HepG2 (cell line): ENCODE measurements at regions of chr14 and their contacts with region 1.

Region 1: GRCh38 chr14:70972107-70972976 is 65.1 kb downstream of the PCNX1 start:
- DNase-seq: peak; percentile 67
- ATAC-seq: peak; percentile 80
- H3K4me3 ChIP-seq: no peak overlapping the region
- H3K27ac ChIP-seq: no peak overlapping the region
- H3K4me1 ChIP-seq: no peaks in the 10 kb centered on the region
- H3K27me3 ChIP-seq: no peaks in the 10 kb centered on the region
- CTCF ChIP-seq: peak; percentile 86
- EP300 ChIP-seq: no peak
- POLR2A ChIP-seq: no peak
- RAD21 ChIP-seq: peak; percentile 60; the same call in 1 of the 2 replicates

Region 2: GRCh38 chr14:70600382-70601157 is 371.8 kb before region 1 on chr14 and contains the start of gene MED6:
- CTCF ChIA-PET with region 1: no interaction called
- POLR2A ChIA-PET with region 1: no interaction called
- in situ Hi-C with region 1: loop called (anchors 25 kb)
- intact Hi-C with region 1: no loop called
- DNase-seq: peak; percentile 89
- ATAC-seq: peak; percentile 99
- H3K4me3 ChIP-seq: peak within 1 kb of the TSS; percentile 90 to 99 (median 98)
- H3K27ac ChIP-seq: peak within 1 kb of the TSS; percentile 86
- H3K4me1 ChIP-seq: peaks cover 23% of the 10 kb centered on the region
- H3K27me3 ChIP-seq: peaks cover 0 to 7% of the 10 kb centered on the region in 2 experiments; a peak in 1 of 5 replicates
- CTCF ChIP-seq: no peak
- EP300 ChIP-seq: 0 out of 4 replicates have a peak, but pooled peaks of 1 of the 2 experiments have one; percentile 36
- POLR2A ChIP-seq: peak; percentile 43 to 85; a peak in 2 of 4 replicates
- RAD21 ChIP-seq: no peak
- total RNA-seq, gene MED6: 47.8 and 64.0 TPM in 2 replicates

Region 3: DNA sequence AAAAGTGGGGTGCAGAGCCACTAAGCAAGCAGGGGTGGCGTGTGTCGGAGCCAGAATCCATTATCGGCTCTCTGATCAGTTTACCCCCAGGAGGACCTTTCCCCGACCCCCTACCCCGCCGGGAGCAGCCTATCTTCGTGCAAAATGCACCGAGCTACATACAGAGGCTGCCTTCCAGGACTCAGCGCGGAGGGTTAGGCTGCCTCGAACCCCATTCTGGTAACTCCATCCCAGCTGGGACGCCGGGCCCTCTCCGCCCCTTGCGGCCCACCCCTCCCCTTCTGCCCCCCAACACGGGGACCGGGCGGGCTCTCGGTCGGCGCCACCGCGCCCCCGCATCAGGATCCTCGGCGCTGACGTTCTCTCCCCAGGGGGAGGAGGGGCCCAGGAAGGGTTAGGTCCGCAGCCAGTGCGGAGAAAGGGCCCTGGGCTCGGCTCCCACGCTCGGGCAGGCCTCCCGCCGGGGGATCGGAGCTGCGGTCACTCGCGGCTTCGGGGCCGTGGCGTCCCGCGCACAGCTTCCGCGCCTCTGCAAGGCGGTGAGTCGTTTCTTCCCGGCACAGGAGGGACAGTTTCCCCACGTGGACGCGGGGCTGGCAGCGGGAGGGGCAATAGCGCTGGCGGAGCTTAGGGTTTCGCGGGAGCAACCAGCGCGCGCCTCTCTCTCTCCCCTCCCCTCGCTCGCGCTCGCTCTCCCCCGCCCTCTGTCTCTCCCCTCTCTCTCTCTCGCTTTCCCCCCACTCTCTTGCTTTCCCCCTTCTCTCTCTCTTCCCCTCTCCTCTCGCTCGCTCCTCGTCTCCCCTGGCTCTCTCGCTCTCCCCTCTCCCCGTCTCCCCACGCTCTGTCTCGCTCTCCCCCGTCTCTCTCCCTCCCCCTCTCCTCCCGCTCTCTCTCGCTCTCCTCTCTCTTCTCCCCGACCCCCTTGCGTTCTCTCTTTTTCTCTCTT is 150.5 kb before region 1 on chr14:
- CTCF ChIA-PET with region 1: interaction called, 18 read pairs
- POLR2A ChIA-PET with region 1: no interaction called
- in situ Hi-C with region 1: no loop called
- intact Hi-C with region 1: loop called (anchors 1 kb)
- DNase-seq: no peak
- ATAC-seq: peak; percentile 69
- H3K4me3 ChIP-seq: peak overlapping the region; percentile 58 to 83 (median 67)
- H3K27ac ChIP-seq: no peak overlapping the region
- H3K4me1 ChIP-seq: peaks cover 17% of the 10 kb centered on the region
- H3K27me3 ChIP-seq: peaks cover 0 to 38% of the 10 kb centered on the region in 2 experiments; a peak in 3 of 5 replicates
- CTCF ChIP-seq: no peak
- EP300 ChIP-seq: no peak
- POLR2A ChIP-seq: no peak
- RAD21 ChIP-seq: no peak